ENCODE measurements at regions of chr11 and their contacts with region 1.

Region 1: GRCh38 chr11:6443269-6444003 is 2.6 kb upstream of the HPX start:
- DNase-seq: peak; percentile 66 to 68
- H3K4me3 ChIP-seq: no peak overlapping the region
- H3K4me3 Mint-ChIP-seq: no peak overlapping the region
- H3K27ac Mint-ChIP-seq: no peak overlapping the region
- H3K4me1 ChIP-seq: peaks cover 29% of the 10 kb centered on the region
- H3K4me1 Mint-ChIP-seq: peaks cover 7% of the 10 kb centered on the region
- H3K27me3 ChIP-seq: no peaks in the 10 kb centered on the region
- H3K27me3 Mint-ChIP-seq: no peaks in the 10 kb centered on the region
- CTCF ChIP-seq: peak; percentile 79 to 85

Region 2: DNA sequence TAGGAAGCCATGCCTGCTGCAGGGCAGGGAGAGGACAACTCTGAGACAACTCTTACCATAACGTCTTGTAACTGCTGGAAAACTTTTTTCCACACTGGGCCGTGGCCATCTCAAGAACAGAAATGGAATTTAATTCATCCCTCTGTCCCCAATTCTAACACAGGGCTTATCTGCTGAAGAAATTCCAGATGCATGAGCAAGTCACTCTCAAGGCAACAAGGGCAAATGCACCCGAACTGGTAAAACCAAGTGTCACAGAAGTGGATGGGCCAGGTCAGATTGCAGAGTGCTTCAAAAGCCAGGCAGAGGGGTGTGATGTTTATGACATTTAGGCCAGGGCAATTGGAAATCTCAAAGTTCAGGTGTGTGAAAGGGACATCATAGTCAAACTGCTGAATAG is 45.8 kb before region 1 on chr11:
- CTCF ChIA-PET with region 1: no interaction called
- POLR2A ChIA-PET with region 1: no interaction called
- intact Hi-C with region 1: loop called (anchors 1 kb)
- DNase-seq: peak; percentile 74 to 83
- H3K4me3 ChIP-seq: no peak overlapping the region
- H3K4me3 Mint-ChIP-seq: peak overlapping the region; percentile 6
- H3K27ac Mint-ChIP-seq: peak overlapping the region; percentile 79
- H3K4me1 ChIP-seq: peaks cover 35% of the 10 kb centered on the region
- H3K4me1 Mint-ChIP-seq: peaks cover 56% of the 10 kb centered on the region
- H3K27me3 ChIP-seq: no peaks in the 10 kb centered on the region
- H3K27me3 Mint-ChIP-seq: no peaks in the 10 kb centered on the region
- CTCF ChIP-seq: no peak

Region 3: GRCh38 chr11:6419009-6419631 is 24.3 kb before region 1 on chr11 and contains the start of gene APBB1:
- CTCF ChIA-PET with region 1: interaction called, 11 read pairs
- POLR2A ChIA-PET with region 1: interaction called, 3 read pairs
- intact Hi-C with region 1: loop called (anchors 1 kb)
- DNase-seq: peak in 1 of 2 experiments; percentile 75
- H3K4me3 ChIP-seq: peak within 1 kb of the TSS; percentile 81
- H3K4me3 Mint-ChIP-seq: no peak within 1 kb of the TSS
- H3K27ac Mint-ChIP-seq: no peak within 1 kb of the TSS
- H3K4me1 ChIP-seq: peaks cover 14% of the 10 kb centered on the region
- H3K4me1 Mint-ChIP-seq: no peaks in the 10 kb centered on the region
- H3K27me3 ChIP-seq: no peaks in the 10 kb centered on the region
- H3K27me3 Mint-ChIP-seq: peaks cover 2% of the 10 kb centered on the region
- CTCF ChIP-seq: peak in 1 of 2 experiments; percentile 13
- total RNA-seq, gene APBB1: 37.8 and 39.0 TPM in 2 replicates

Region 4: GRCh38 chr11:6431861-6432260 is 11.6 kb before region 1 on chr11:
- CTCF ChIA-PET with region 1: interaction called, 11 read pairs
- POLR2A ChIA-PET with region 1: no interaction called
- intact Hi-C with region 1: loop called (anchors 2 kb)
- DNase-seq: no peak
- H3K4me3 ChIP-seq: no peak overlapping the region
- H3K4me3 Mint-ChIP-seq: no peak overlapping the region
- H3K27ac Mint-ChIP-seq: no peak overlapping the region
- H3K4me1 ChIP-seq: peaks cover 20% of the 10 kb centered on the region
- H3K4me1 Mint-ChIP-seq: peaks cover 31% of the 10 kb centered on the region
- H3K27me3 ChIP-seq: no peaks in the 10 kb centered on the region
- H3K27me3 Mint-ChIP-seq: no peaks in the 10 kb centered on the region
- CTCF ChIP-seq: no peak

Region 5: GRCh38 chr11:6458352-6459098 is 15.1 kb after region 1 on chr11:
- CTCF ChIA-PET with region 1: interaction called, 5 read pairs
- POLR2A ChIA-PET with region 1: interaction called, 4 read pairs
- intact Hi-C with region 1: loop called (anchors 1 kb)
- DNase-seq: peak; percentile 79 to 84
- H3K4me3 ChIP-seq: no peak overlapping the region
- H3K4me3 Mint-ChIP-seq: peak overlapping the region; percentile 48
- H3K27ac Mint-ChIP-seq: no peak overlapping the region
- H3K4me1 ChIP-seq: peaks cover 33% of the 10 kb centered on the region
- H3K4me1 Mint-ChIP-seq: peaks cover 11% of the 10 kb centered on the region
- H3K27me3 ChIP-seq: no peaks in the 10 kb centered on the region
- H3K27me3 Mint-ChIP-seq: no peaks in the 10 kb centered on the region
- CTCF ChIP-seq: no peak

Region 6: DNA sequence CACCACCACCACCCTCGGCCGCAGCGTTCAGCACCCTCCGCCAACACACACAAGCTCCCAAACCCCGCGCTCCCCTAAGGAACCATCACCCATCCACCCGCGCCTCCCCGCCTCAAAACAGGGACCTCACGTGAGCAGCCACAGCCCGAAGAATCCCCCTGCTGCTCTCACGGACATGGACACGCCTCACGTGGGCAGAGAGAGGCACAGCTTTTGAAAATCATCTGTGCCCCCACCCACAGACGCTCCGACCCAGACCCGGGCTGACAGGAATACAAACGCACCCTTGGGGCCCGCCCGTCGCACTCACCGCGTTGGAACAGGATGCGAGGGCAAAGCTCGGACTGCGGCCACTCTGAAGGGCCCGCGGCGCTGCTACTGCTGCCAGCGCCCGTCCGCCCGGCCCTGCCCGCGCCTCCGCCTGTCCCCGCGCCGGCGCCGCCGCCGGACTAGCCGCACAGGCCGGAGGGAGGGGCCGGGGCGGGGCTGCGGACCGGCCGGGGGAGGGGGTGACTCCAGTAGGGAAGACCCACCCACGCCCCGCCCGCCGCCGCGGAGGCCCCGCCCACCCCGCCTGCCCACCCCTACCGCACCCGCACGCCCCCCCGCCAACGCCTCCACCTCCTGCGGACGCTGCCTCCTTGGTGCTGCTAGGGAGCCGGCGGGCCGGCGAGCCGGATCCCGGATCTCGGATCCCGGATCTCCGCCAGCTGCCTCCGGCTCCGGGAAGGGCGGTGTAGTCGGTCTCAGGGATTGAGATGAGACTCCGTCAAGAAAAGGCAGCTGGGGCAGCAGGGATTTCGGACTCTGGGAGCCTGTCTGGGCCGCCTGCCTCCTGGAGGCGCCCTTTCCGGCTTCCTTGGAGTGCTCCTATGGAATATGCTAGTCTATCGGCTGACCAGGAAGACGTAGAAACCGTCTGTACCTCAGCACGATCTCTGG is 30.3 kb after region 1 on chr11 and contains the start of gene TRIM3:
- CTCF ChIA-PET with region 1: interaction called, 7 read pairs
- POLR2A ChIA-PET with region 1: interaction called, 4 read pairs
- intact Hi-C with region 1: loop called (anchors 1 kb)
- DNase-seq: peak; percentile 92 to 94
- H3K4me3 ChIP-seq: peak within 1 kb of the TSS; percentile 65
- H3K4me3 Mint-ChIP-seq: peak within 1 kb of the TSS; percentile 84
- H3K27ac Mint-ChIP-seq: peak within 1 kb of the TSS; percentile 96
- H3K4me1 ChIP-seq: peaks cover 30% of the 10 kb centered on the region
- H3K4me1 Mint-ChIP-seq: peaks cover 29% of the 10 kb centered on the region
- H3K27me3 ChIP-seq: no peaks in the 10 kb centered on the region
- H3K27me3 Mint-ChIP-seq: no peaks in the 10 kb centered on the region
- CTCF ChIP-seq: peak in 1 of 2 experiments; percentile 39
- total RNA-seq, gene TRIM3: 28.0 and 33.4 TPM in 2 replicates

Region 7: DNA sequence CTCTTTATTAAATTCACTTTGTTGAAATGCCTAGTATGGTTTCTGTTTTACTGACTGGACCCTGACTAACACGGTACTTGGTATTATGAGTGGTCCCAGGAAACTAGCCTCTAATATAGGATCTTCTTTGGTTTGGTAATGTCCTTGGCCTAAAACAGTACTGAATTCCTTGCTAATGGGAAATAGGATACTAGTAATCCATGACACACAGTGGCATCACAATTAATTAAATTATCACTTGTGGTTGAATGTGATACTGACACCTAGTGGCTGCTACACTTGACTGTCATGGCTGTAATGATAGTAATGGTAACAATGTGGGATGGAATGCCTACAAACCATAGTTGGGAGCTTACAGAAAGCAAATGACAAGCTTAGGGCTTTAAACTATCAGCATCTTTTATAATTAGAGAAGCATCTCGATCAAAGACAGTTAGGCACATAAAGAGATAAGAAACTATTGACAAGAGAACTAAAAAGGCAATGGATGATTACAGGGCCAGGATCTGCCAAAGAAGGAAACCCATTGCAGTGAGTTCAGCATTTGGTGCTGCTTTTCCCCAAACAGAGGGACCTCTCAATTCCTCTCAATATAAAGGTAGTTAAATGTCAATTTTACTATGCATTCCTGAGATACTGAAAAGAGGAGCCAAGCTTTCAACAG is 62.3 kb after region 1 on chr11:
- CTCF ChIA-PET with region 1: no interaction called
- POLR2A ChIA-PET with region 1: no interaction called
- intact Hi-C with region 1: loop called (anchors 1 kb)
- DNase-seq: peak in 1 of 2 experiments; percentile 48
- H3K4me3 ChIP-seq: no peak overlapping the region
- H3K4me3 Mint-ChIP-seq: no peak overlapping the region
- H3K27ac Mint-ChIP-seq: no peak overlapping the region
- H3K4me1 ChIP-seq: no peaks in the 10 kb centered on the region
- H3K4me1 Mint-ChIP-seq: peaks cover 5% of the 10 kb centered on the region
- H3K27me3 ChIP-seq: no peaks in the 10 kb centered on the region
- H3K27me3 Mint-ChIP-seq: no peaks in the 10 kb centered on the region
- CTCF ChIP-seq: peak; percentile 83 to 84

Region 8: GRCh38 chr11:6544921-6545850 is 101.8 kb after region 1 on chr11:
- CTCF ChIA-PET with region 1: no interaction called
- POLR2A ChIA-PET with region 1: no interaction called
- intact Hi-C with region 1: no loop called
- DNase-seq: no peak
- H3K4me3 ChIP-seq: no peak overlapping the region
- H3K4me3 Mint-ChIP-seq: no peak overlapping the region
- H3K27ac Mint-ChIP-seq: no peak overlapping the region
- H3K4me1 ChIP-seq: no peaks in the 10 kb centered on the region
- H3K4me1 Mint-ChIP-seq: no peaks in the 10 kb centered on the region
- H3K27me3 ChIP-seq: no peaks in the 10 kb centered on the region
- H3K27me3 Mint-ChIP-seq: peaks cover 9% of the 10 kb centered on the region
- CTCF ChIP-seq: no peak